MCF 10A (cell line): ENCODE measurements at regions of chr12 and their contacts with region 1.

Region 1: DNA sequence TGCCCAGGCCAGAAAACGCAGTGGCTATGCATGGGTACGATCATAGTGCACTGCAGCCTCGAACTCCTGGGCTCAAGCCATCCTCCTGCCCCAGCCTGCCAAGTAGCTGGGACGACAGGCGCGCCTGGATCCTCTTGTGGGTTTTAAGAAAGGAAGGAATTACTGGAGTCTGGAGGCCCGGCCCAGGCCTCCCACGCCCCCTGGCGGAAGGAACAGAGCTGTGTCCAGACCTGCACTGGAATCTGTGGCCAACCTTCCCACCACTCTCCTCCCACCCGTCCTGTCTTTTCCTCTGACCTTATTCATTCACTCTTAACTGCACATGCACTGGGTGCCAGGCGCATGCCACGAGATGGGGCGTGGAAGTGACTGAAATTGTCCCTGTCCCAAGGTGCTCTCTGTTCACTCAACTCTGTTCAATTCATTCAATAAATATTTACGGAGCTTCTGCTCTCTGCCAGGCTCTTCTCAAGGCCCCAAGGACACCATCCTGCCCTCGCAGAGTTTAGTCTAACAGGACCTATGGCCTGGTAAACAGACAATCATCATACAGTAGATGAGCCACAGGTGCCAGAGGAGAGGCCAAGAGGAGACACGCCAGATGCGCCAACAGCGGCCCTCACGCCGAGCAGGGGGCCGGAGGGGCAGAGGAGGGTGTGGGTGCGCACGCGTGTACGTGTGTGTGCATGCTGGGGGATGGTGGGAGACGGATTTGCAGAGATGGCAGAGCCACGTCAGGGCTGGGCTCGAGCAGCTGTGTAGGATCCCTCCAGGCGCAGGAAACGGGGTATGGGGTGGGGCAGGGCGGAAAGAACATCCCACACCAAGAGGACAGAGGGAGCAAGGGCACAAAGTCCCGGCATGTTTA is 13.7 kb upstream of the TMEM106C start:
- DNase-seq: peak; percentile 88
- H3K4me3 Mint-ChIP-seq: no peak overlapping the region
- H3K27ac Mint-ChIP-seq: no peak overlapping the region
- H3K4me1 Mint-ChIP-seq: peaks cover 45% of the 10 kb centered on the region
- H3K27me3 Mint-ChIP-seq: no peaks in the 10 kb centered on the region
- CTCF ChIP-seq: peak; percentile 82

Region 2: DNA sequence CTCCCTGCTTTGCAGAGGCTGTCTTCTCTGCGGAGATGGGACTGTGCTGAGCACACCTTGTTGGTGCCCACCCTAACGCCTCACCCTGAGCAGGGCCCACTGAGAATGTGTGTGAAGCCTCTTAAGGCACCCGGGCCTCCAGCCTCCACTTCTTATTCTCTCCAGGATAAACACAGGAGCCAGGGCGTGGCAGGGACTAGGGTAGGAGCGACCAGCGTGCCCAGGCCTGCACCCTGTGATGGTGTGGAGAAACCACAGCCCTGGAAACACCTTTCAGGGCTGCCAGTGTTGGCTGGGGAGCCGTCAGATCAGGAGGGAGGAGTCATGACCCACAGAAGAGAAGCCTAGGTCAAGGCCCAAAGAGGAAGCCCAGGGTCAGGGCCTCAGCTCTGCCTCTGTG is 86.2 kb before region 1 on chr12:
- CTCF ChIA-PET with region 1: interaction called, 10 read pairs
- POLR2A ChIA-PET with region 1: interaction called, 3 read pairs
- intact Hi-C with region 1: loop called (anchors 5 kb)
- DNase-seq: peak; percentile 93
- H3K4me3 Mint-ChIP-seq: no peak overlapping the region
- H3K27ac Mint-ChIP-seq: peak overlapping the region; percentile 81
- H3K4me1 Mint-ChIP-seq: peaks cover 53% of the 10 kb centered on the region
- H3K27me3 Mint-ChIP-seq: no peaks in the 10 kb centered on the region
- CTCF ChIP-seq: no peak

Region 3: DNA sequence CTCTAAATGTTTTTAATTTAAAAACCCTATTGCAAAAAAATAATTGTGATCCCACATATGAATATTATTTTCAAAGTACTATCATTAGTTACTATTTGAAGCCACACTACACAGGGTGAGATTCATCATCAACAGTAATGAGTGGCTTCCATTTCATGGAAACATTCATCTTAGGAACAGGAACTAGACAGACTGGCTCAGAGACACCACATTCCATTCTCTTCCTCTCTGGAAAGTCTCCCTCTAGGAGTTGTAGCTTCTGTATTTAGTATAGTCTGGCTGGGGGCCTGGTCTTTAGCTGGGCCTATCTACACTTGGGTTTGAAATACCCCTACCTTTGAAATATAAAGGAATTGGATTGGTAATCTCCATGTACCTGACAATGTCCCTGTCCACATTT is 38.7 kb before region 1 on chr12:
- CTCF ChIA-PET with region 1: interaction called, 22 read pairs
- POLR2A ChIA-PET with region 1: interaction called, 25 read pairs
- intact Hi-C with region 1: no loop called
- DNase-seq: no peak
- H3K4me3 Mint-ChIP-seq: no peak overlapping the region
- H3K27ac Mint-ChIP-seq: no peak overlapping the region
- H3K4me1 Mint-ChIP-seq: no peaks in the 10 kb centered on the region
- H3K27me3 Mint-ChIP-seq: peaks cover 13% of the 10 kb centered on the region
- CTCF ChIP-seq: no peak